WTC11 (cell line): ENCODE measurements at regions of chr5 and their contacts with region 1.

Region 1: GRCh38 chr5:66529182-66529581 is 67.0 kb upstream of the MAST4 start:
- DNase-seq: peak; percentile 51
- ATAC-seq: peak; percentile 97
- H3K4me3 Mint-ChIP-seq: no peak overlapping the region
- H3K27ac Mint-ChIP-seq: no peak overlapping the region
- H3K4me1 Mint-ChIP-seq: peaks cover 9% of the 10 kb centered on the region; the same call in 1 of the 2 replicates
- H3K27me3 Mint-ChIP-seq: no peaks in the 10 kb centered on the region
- CTCF ChIP-seq: no peak

Region 2: GRCh38 chr5:66247176-66247960 is 281.8 kb before region 1 on chr5:
- CTCF ChIA-PET with region 1: no interaction called
- POLR2A ChIA-PET with region 1: no interaction called
- DNase-seq: no peak
- ATAC-seq: no peak
- H3K4me3 Mint-ChIP-seq: no peak overlapping the region
- H3K27ac Mint-ChIP-seq: no peak overlapping the region
- H3K4me1 Mint-ChIP-seq: peaks cover 17% of the 10 kb centered on the region
- H3K27me3 Mint-ChIP-seq: peaks cover 2% of the 10 kb centered on the region; the same call in 1 of the 2 replicates
- CTCF ChIP-seq: no peak

Region 3: GRCh38 chr5:66454186-66455078 is 74.8 kb before region 1 on chr5:
- CTCF ChIA-PET with region 1: no interaction called
- POLR2A ChIA-PET with region 1: no interaction called
- DNase-seq: no peak
- ATAC-seq: no peak
- H3K4me3 Mint-ChIP-seq: no peak overlapping the region
- H3K27ac Mint-ChIP-seq: no peak overlapping the region
- H3K4me1 Mint-ChIP-seq: peaks cover 20% of the 10 kb centered on the region
- H3K27me3 Mint-ChIP-seq: peaks cover 3% of the 10 kb centered on the region; the same call in 1 of the 2 replicates
- CTCF ChIP-seq: no peak

Region 4: DNA sequence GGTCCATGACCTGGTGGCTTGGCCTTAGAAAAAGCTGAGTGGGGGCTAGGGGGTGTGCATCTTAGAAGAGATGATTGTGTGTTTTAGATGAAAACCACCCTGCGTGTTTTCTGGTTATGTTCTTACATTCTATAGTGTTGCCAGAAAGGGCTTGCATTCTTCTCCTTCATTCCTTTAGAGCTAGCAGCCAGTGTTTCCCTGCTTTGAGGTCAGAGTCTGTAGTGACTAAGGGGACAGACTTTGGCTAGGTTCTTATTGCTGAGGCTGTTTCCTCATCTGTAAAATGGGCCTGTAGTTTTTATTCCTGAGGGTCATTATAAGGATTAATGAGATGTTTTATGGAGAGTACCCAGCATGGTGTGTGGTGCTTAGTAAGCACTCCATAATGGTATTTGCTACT is 73.4 kb after region 1 on chr5:
- CTCF ChIA-PET with region 1: no interaction called
- POLR2A ChIA-PET with region 1: no interaction called
- DNase-seq: no peak
- ATAC-seq: no peak
- H3K4me3 Mint-ChIP-seq: no peak overlapping the region
- H3K27ac Mint-ChIP-seq: no peak overlapping the region
- H3K4me1 Mint-ChIP-seq: peaks cover 4% of the 10 kb centered on the region; the same call in 1 of the 2 replicates
- H3K27me3 Mint-ChIP-seq: peaks cover 32% of the 10 kb centered on the region
- CTCF ChIP-seq: no peak

Region 5: DNA sequence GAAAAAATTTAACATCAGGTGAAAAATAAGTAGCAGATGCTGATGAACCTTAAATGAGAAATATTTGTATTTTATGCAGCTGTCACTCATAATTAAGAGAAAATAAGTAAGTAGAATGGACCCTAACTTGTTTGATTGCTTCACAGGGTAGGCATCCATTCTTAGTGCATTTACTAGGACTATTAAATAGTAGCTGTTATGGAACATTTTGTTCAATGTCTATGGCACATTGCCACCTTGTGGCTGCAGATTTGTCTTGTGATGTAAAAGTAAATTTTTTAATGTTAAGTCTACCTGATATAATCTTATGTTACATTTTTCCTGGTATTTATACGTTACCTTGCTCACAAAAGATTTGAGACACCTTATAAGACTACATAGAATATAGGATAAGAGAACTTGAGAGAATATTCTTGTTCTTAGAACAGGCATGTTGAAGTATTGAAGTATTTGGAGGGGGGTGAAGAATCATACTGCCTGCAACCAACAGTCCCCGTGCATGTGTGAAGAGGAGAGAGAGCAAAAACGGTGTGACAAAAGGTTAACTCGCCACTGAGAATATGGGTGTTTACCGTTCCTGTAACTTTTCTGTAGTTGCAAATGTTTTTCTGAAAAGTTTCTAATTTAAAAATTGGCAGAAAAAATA is 228.1 kb after region 1 on chr5:
- CTCF ChIA-PET with region 1: interaction called, 11 read pairs
- POLR2A ChIA-PET with region 1: no interaction called
- DNase-seq: peak; percentile 11
- ATAC-seq: no peak
- H3K4me3 Mint-ChIP-seq: no peak overlapping the region
- H3K27ac Mint-ChIP-seq: no peak overlapping the region
- H3K4me1 Mint-ChIP-seq: no peaks in the 10 kb centered on the region
- H3K27me3 Mint-ChIP-seq: no peaks in the 10 kb centered on the region; the same call in 1 of the 2 replicates
- CTCF ChIP-seq: 0 out of 2 replicates have a peak, but pooled peaks have one; percentile 19